K562 (cell line): ENCODE measurements at regions of chr17 and their contacts with region 1.

Region 1: GRCh38 chr17:13601776-13602551 is at the start of gene HS3ST3A1:
- DNase-seq: peak; percentile 80 to 89 (median 85)
- ATAC-seq: peak; percentile 81
- H3K4me3 ChIP-seq: peak within 1 kb of the TSS; percentile 58
- H3K27ac ChIP-seq: peak within 1 kb of the TSS; percentile 67
- H3K4me1 ChIP-seq: peaks cover 3 to 22% of the 10 kb centered on the region in 2 experiments; a peak in 3 of 5 replicates
- H3K27me3 ChIP-seq: no peaks in the 10 kb centered on the region
- CTCF ChIP-seq: no peak
- EP300 ChIP-seq: no peak
- POLR2A ChIP-seq: peak; percentile 60; the same call in 1 of the 2 replicates
- RAD21 ChIP-seq: no peak
- polyA plus RNA-seq, gene HS3ST3A1: 0.25 to 0.39 TPM

Region 2: DNA sequence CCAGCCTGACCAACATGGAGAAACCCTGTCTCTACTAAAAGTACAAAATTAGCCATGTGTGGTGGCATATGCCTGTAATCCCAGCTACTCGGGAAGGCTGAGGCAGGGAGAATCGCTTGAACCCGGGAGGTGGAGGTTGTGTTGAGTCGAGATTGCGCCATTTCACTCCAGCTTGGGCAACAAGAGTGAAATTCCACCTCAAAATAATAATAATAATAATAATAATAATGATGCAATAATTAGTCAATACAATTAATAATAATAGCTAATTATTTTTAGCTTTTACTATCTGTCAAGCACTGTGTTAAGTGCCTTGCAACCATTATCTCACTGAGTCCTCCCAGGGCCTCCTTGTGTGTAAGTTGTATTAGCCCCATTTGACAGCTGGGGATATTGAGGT is 14.0 kb after region 1 on chr17:
- CTCF ChIA-PET with region 1: no interaction called
- POLR2A ChIA-PET with region 1: no interaction called
- in situ Hi-C with region 1: no loop called
- intact Hi-C with region 1: no loop called
- DNase-seq: no peak
- ATAC-seq: no peak
- H3K4me3 ChIP-seq: no peak overlapping the region
- H3K27ac ChIP-seq: no peak overlapping the region
- H3K4me1 ChIP-seq: no peaks in the 10 kb centered on the region; a peak in 1 of 5 replicates
- H3K27me3 ChIP-seq: no peaks in the 10 kb centered on the region
- CTCF ChIP-seq: no peak
- EP300 ChIP-seq: no peak
- POLR2A ChIP-seq: no peak
- RAD21 ChIP-seq: no peak

Region 3: GRCh38 chr17:13638855-13639458 is 37.0 kb after region 1 on chr17:
- CTCF ChIA-PET with region 1: no interaction called
- POLR2A ChIA-PET with region 1: no interaction called
- in situ Hi-C with region 1: no loop called
- intact Hi-C with region 1: loop called (anchors 2 kb)
- DNase-seq: peak in 1 of 4 experiments; percentile 69
- ATAC-seq: peak; percentile 69
- H3K4me3 ChIP-seq: no peak overlapping the region
- H3K27ac ChIP-seq: peak overlapping the region; percentile 10; the same call in 1 of the 3 replicates
- H3K4me1 ChIP-seq: peaks cover 0 to 8% of the 10 kb centered on the region in 2 experiments; a peak in 2 of 5 replicates
- H3K27me3 ChIP-seq: peaks cover 0 to 8% of the 10 kb centered on the region in 2 experiments; a peak in 4 of 5 replicates
- CTCF ChIP-seq: no peak
- EP300 ChIP-seq: peak; percentile 35; the same call in 1 of the 2 replicates
- POLR2A ChIP-seq: no peak
- RAD21 ChIP-seq: no peak